AG04450 (cell line): ENCODE measurements at regions of chr17 and their contacts with region 1.

Region 1: DNA sequence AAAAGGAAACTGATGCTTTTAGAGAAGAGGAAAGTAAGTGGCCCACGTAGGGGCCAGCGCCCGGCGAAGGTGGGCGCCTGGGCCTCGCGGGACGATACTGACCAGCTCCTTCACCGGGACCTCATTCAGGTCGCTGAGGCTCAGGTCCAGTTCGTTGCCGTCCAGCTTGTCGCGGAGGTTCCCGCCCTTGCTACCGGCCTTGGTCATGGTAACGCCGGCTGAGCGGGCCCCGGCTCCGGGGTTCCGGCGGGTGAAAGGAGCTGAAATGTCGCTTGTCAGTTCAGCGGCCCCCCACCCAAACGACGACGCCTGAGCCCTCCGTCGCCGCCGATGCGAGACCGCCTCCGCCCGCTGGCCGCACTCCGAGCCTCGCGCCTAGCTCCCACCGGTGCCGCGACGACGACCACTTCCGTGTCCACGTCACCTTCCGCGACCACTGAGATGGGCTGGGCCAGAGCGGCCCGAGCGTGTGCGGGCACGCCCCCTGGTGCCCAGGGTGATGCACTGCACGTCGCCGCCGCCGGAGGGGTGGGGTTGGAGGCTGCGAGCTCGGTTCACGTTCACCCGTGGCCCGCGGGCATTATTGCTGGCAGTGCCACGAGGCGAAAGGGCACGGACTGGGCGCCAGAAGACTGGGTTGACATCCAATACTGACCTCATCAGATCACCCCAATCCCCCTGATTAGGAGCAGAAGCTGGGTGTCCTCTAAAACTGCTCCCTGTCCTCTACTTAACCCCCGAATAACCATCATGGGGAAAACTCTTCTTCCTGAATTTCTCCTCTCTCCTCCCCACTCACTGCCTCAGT is at the start of gene LRRC59:
- DNase-seq: peak; percentile 53
- H3K4me3 ChIP-seq: peak within 1 kb of the TSS; percentile 94
- H3K27ac ChIP-seq: peak within 1 kb of the TSS; percentile 91
- H3K27me3 ChIP-seq: no peaks in the 10 kb centered on the region
- CTCF ChIP-seq: peak; percentile 87
- polyA plus RNA-seq, gene LRRC59: 143 and 145 TPM in 2 replicates

Region 2: DNA sequence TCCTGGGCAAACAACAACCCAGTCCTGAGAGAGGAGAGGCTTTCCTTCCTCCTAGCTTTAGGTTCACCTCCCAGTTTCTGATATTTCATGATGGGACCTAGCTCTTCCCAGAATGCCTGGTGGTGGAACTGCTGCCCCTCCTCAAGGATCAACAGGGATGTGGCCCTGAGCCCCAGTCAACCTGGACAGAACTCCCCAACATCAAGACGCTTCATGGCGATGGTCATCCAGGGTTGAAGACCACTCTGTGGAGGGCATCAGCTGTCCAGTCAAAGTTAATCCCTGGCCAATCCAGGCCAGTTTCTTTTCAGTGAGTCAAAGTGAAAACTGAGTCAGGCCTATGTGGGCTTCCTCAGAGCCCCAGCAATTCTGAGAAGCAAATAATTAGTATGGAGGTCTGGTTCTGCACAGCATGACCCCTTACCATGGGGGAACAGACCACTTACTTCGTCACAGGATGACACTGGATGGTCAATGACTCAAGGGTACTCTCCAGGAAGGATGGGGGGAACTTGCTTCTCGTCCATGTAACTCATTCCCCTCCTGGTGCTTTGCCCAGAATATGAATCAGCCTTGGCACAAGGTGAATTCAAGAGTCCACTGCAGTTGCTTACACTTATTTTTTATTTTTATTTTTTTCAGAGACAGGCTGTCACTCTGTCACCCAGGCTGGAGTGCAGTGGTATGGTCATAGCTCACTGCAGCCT is 66.1 kb before region 1 on chr17:
- CTCF ChIA-PET with region 1: no interaction called
- POLR2A ChIA-PET with region 1: no interaction called
- DNase-seq: peak; percentile 63
- H3K4me3 ChIP-seq: no peak overlapping the region
- H3K27ac ChIP-seq: peak overlapping the region; percentile 31
- H3K27me3 ChIP-seq: peaks cover 2% of the 10 kb centered on the region
- CTCF ChIP-seq: no peak

Region 3: GRCh38 chr17:50372758-50373556 is 24.4 kb before region 1 on chr17 and contains the starts of genes EME1 and MRPL27:
- CTCF ChIA-PET with region 1: interaction called, 10 read pairs
- POLR2A ChIA-PET with region 1: interaction called, 3 read pairs
- DNase-seq: peak; percentile 44
- H3K4me3 ChIP-seq: peak within 1 kb of the TSS; percentile 66
- H3K27ac ChIP-seq: peak within 1 kb of the TSS; percentile 76
- H3K27me3 ChIP-seq: no peaks in the 10 kb centered on the region
- CTCF ChIP-seq: no peak
- polyA plus RNA-seq, gene EME1: 2.2 and 2.5 TPM in 2 replicates
- polyA plus RNA-seq, gene MRPL27: 106 and 116 TPM in 2 replicates

Region 4: GRCh38 chr17:50386510-50386909 is 10.8 kb before region 1 on chr17:
- CTCF ChIA-PET with region 1: interaction called, 13 read pairs
- POLR2A ChIA-PET with region 1: interaction called, 9 read pairs
- DNase-seq: no peak
- H3K4me3 ChIP-seq: no peak overlapping the region
- H3K27ac ChIP-seq: no peak overlapping the region
- H3K27me3 ChIP-seq: no peaks in the 10 kb centered on the region
- CTCF ChIP-seq: no peak

Region 5: DNA sequence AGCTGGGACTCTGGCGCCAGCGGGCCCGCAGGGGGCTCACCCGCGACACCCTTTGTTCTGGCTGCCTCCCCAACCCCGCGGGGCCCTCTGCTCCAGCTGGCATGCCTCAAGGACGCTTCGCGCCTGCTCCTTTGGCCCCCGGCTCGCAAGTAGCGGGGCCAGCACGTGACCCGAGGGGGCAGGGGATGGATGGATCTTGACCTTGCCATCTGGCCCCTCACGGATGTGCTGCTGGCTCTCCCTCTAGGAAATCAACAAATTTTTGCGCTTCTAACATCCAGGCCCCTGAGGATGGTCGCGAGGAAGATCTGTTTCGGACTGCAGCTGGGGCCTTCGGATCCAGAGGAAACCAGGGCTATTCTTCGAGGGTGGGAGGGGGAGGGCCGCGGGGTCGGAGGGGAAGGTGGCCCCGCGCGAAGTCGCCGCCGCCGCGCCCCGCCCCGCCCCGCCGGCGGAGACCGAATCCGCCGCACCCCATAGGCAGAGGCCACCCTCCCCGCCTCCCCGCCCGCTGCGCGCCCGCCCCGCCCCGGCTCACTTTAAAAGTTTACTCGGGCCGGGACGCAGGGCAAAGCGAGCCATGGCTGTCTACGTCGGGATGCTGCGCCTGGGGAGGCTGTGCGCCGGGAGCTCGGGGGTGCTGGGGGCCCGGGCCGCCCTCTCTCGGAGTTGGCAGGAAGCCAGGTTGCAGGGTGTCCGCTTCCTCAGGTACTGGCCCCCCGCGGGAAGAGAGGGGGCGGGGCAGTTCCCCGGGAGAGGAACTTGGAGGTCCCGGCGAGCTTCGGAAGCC is 28.6 kb after region 1 on chr17 and contains the start of gene ACSF2:
- CTCF ChIA-PET with region 1: interaction called, 25 read pairs
- POLR2A ChIA-PET with region 1: interaction called, 13 read pairs
- DNase-seq: no peak
- H3K4me3 ChIP-seq: peak within 1 kb of the TSS; percentile 73
- H3K27ac ChIP-seq: peak within 1 kb of the TSS; percentile 68
- H3K27me3 ChIP-seq: no peaks in the 10 kb centered on the region
- CTCF ChIP-seq: no peak
- polyA plus RNA-seq, gene ACSF2: 42.5 and 52.1 TPM in 2 replicates

Region 6: GRCh38 chr17:50469208-50469605 is 71.9 kb after region 1 on chr17:
- CTCF ChIA-PET with region 1: interaction called, 21 read pairs
- POLR2A ChIA-PET with region 1: interaction called, 3 read pairs
- DNase-seq: no peak
- H3K4me3 ChIP-seq: peak overlapping the region; percentile 40
- H3K27ac ChIP-seq: no peak overlapping the region
- H3K27me3 ChIP-seq: peaks cover 26% of the 10 kb centered on the region
- CTCF ChIP-seq: no peak

Region 7: GRCh38 chr17:50478391-50479381 is 81.4 kb after region 1 on chr17 and contains the start of gene RSAD1:
- CTCF ChIA-PET with region 1: interaction called, 28 read pairs
- POLR2A ChIA-PET with region 1: interaction called, 5 read pairs
- DNase-seq: peak; percentile 48
- H3K4me3 ChIP-seq: peak within 1 kb of the TSS; percentile 88
- H3K27ac ChIP-seq: peak within 1 kb of the TSS; percentile 73
- H3K27me3 ChIP-seq: no peaks in the 10 kb centered on the region
- CTCF ChIP-seq: peak; percentile 66
- polyA plus RNA-seq, gene RSAD1: 15.5 and 17.5 TPM in 2 replicates